PC-3 (cell line): ENCODE measurements at regions of chr2 and their contacts with region 1.

Region 1: GRCh38 chr2:148989882-148990493 is 48.5 kb upstream of the LYPD6B start:
- DNase-seq: peak; percentile 87
- ATAC-seq: peak; percentile 92
- H3K4me3 ChIP-seq: no peak overlapping the region
- H3K27ac ChIP-seq: no peak overlapping the region
- H3K4me1 ChIP-seq: no peaks in the 10 kb centered on the region
- H3K27me3 ChIP-seq: no peaks in the 10 kb centered on the region
- CTCF ChIP-seq: peak; percentile 87

Region 2: DNA sequence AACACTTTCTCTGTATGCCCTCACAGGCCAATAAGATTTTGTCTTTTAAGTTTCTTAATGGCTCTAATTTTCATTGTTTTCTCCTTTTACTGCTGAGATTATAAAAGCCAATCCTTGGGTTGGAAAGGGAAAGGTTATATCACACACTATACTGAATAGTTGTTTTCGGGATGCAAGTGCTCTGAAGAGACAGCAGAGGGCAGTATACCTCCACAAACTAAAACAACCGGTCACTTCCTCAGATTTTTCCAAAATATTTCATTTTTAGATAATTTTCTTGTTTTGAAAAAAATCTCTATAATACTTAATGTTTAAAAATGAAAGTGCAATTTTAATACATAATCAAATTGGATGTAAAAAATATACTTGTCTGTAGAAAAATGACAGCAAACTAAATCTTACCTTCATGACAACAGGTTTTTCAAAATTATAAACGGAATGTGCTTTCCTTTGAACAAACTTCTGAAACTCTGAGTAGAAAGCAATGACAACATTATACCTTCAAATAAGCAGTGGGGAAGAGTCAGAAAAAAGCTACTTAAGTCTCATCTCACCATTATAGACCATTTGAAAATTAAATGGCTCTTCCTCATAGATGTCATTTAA is 1052.1 kb before region 1 on chr2:
- CTCF ChIA-PET with region 1: no interaction called
- POLR2A ChIA-PET with region 1: no interaction called
- intact Hi-C with region 1: loop called (anchors 1 kb)
- DNase-seq: peak; percentile 56
- ATAC-seq: no peak
- H3K4me3 ChIP-seq: no peak overlapping the region
- H3K27ac ChIP-seq: no peak overlapping the region
- H3K4me1 ChIP-seq: no peaks in the 10 kb centered on the region
- H3K27me3 ChIP-seq: no peaks in the 10 kb centered on the region
- CTCF ChIP-seq: peak; percentile 87

Region 3: GRCh38 chr2:147989809-147990403 is 1000.1 kb before region 1 on chr2:
- CTCF ChIA-PET with region 1: no interaction called
- POLR2A ChIA-PET with region 1: no interaction called
- intact Hi-C with region 1: loop called (anchors 5 kb)
- DNase-seq: peak; percentile 66
- ATAC-seq: peak; percentile 70
- H3K4me3 ChIP-seq: no peak overlapping the region
- H3K27ac ChIP-seq: no peak overlapping the region
- H3K4me1 ChIP-seq: no peaks in the 10 kb centered on the region
- H3K27me3 ChIP-seq: no peaks in the 10 kb centered on the region
- CTCF ChIP-seq: peak; percentile 93

Region 4: DNA sequence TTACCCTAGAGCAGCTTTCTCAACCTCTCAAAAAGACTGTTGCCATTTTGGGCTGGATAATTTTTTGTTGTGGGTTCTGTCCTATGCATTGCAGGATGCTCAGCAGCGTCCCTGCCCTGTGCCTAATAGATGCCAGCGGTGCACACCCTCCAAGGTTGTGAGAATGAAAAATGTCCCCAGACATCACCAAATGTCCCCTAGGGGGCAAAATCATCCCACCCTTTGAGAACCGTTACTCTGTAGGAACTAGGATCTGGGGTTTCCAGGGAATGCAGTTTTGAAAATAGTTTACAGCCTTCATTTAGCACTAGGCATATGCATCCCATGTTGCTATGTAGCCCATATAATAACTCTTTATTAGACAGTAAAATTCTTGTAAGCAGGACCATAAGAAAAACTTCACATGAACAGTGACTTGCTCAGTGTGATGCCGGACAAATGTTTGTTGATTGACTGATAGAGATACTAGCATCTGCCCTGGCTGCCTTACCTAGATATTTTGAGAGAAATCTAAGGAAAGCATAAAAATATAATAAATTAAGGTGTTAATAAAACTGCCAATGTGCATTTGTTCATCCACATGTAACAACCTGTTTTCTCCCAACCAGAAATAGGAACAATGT is 424.6 kb before region 1 on chr2:
- CTCF ChIA-PET with region 1: no interaction called
- POLR2A ChIA-PET with region 1: no interaction called
- intact Hi-C with region 1: loop called (anchors 1 kb)
- DNase-seq: peak; percentile 49
- ATAC-seq: peak; percentile 74
- H3K4me3 ChIP-seq: no peak overlapping the region
- H3K27ac ChIP-seq: no peak overlapping the region
- H3K4me1 ChIP-seq: no peaks in the 10 kb centered on the region
- H3K27me3 ChIP-seq: peaks cover 23% of the 10 kb centered on the region
- CTCF ChIP-seq: peak; percentile 48; the same call in 1 of the 2 replicates